ENCODE measurements at regions of chr15 and their contacts with region 1.

Region 1: GRCh38 chr15:85515212-85515611 is 134.8 kb downstream of the AKAP13 start:
- DNase-seq: peak; percentile 85
- ATAC-seq: peak; percentile 71
- H3K4me3 ChIP-seq: peak overlapping the region in 1 of 3 experiments; percentile 33; a peak in 2 of 6 replicates
- H3K27ac ChIP-seq: peak overlapping the region; percentile 40
- H3K4me1 ChIP-seq: peaks cover 46% of the 10 kb centered on the region
- H3K27me3 ChIP-seq: no peaks in the 10 kb centered on the region
- CTCF ChIP-seq: no peak
- EP300 ChIP-seq: peak in 1 of 2 experiments; percentile 50; a peak in 2 of 4 replicates
- POLR2A ChIP-seq: no peak
- RAD21 ChIP-seq: no peak

Region 2: DNA sequence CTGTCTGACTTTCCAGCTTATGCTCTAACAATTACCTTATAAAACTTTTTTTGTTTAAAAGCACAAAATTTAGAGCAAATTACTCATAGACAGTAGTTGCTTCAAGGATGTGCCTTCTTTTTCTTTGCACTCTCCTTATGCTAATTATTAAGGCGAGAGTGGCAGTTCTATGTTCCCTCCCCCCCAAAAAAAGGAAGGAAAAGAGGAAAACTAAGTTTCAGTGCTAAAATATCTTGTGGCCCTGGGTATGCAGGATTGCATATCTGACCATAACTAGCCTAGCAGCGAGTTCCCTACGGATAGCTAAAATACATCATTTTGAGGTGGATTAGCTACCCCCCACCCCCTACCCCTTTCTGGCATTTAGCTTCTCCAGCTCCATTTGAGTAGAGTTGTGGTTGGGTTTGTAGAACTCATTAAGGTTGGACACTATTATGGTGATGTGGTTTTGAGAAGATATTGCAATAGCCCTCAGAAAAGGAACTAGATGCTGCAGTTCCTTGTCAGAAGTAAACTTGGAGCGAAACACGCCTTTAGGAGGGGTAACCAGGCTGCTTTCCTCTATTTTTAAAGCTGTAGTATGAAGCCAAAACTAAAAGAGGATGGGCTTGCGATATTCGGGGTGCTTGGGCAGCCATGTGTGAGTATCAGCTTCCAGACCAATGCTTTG is 39.8 kb after region 1 on chr15:
- CTCF ChIA-PET with region 1: no interaction called
- POLR2A ChIA-PET with region 1: no interaction called
- in situ Hi-C with region 1: no loop called
- intact Hi-C with region 1: loop called (anchors 5 kb)
- DNase-seq: no peak
- ATAC-seq: no peak
- H3K4me3 ChIP-seq: no peak overlapping the region
- H3K27ac ChIP-seq: no peak overlapping the region
- H3K4me1 ChIP-seq: no peaks in the 10 kb centered on the region
- H3K27me3 ChIP-seq: no peaks in the 10 kb centered on the region
- CTCF ChIP-seq: no peak
- EP300 ChIP-seq: no peak
- POLR2A ChIP-seq: no peak
- RAD21 ChIP-seq: no peak

Region 3: GRCh38 chr15:85607842-85608241 is 92.6 kb after region 1 on chr15:
- CTCF ChIA-PET with region 1: no interaction called
- POLR2A ChIA-PET with region 1: no interaction called
- in situ Hi-C with region 1: no loop called
- intact Hi-C with region 1: no loop called
- DNase-seq: no peak
- ATAC-seq: no peak
- H3K4me3 ChIP-seq: no peak overlapping the region
- H3K27ac ChIP-seq: no peak overlapping the region
- H3K4me1 ChIP-seq: peaks cover 18% of the 10 kb centered on the region
- H3K27me3 ChIP-seq: no peaks in the 10 kb centered on the region
- CTCF ChIP-seq: no peak
- EP300 ChIP-seq: no peak
- POLR2A ChIP-seq: no peak
- RAD21 ChIP-seq: no peak